PC-3 (cell line): ENCODE measurements at regions of chr3 and their contacts with region 1.

Region 1: GRCh38 chr3:180594631-180595558 is 7.1 kb upstream of the TTC14 start:
- DNase-seq: peak; percentile 75
- ATAC-seq: peak; percentile 93
- H3K4me3 ChIP-seq: no peak overlapping the region
- H3K27ac ChIP-seq: no peak overlapping the region
- H3K4me1 ChIP-seq: peaks cover 11% of the 10 kb centered on the region
- H3K27me3 ChIP-seq: no peaks in the 10 kb centered on the region
- CTCF ChIP-seq: peak; percentile 90

Region 2: GRCh38 chr3:179750720-179751328 is 844.1 kb before region 1 on chr3:
- CTCF ChIA-PET with region 1: no interaction called
- POLR2A ChIA-PET with region 1: no interaction called
- intact Hi-C with region 1: loop called (anchors 5 kb)
- DNase-seq: peak; percentile 60
- ATAC-seq: peak; percentile 71
- H3K4me3 ChIP-seq: no peak overlapping the region
- H3K27ac ChIP-seq: no peak overlapping the region
- H3K4me1 ChIP-seq: no peaks in the 10 kb centered on the region
- H3K27me3 ChIP-seq: no peaks in the 10 kb centered on the region
- CTCF ChIP-seq: peak; percentile 83

Region 3: GRCh38 chr3:179811321-179812095 is 783.4 kb before region 1 on chr3:
- CTCF ChIA-PET with region 1: interaction called, 20 read pairs
- POLR2A ChIA-PET with region 1: no interaction called
- intact Hi-C with region 1: loop called (anchors 1 kb)
- DNase-seq: peak; percentile 88
- ATAC-seq: peak; percentile 81
- H3K4me3 ChIP-seq: no peak overlapping the region
- H3K27ac ChIP-seq: peak overlapping the region; percentile 77
- H3K4me1 ChIP-seq: peaks cover 13% of the 10 kb centered on the region; the same call in 1 of the 2 replicates
- H3K27me3 ChIP-seq: no peaks in the 10 kb centered on the region
- CTCF ChIP-seq: peak; percentile 93

Region 4: GRCh38 chr3:179969525-179969924 is 625.4 kb before region 1 on chr3:
- CTCF ChIA-PET with region 1: no interaction called
- POLR2A ChIA-PET with region 1: interaction called, 17 read pairs
- intact Hi-C with region 1: no loop called
- DNase-seq: peak; percentile 95
- ATAC-seq: peak; percentile 87
- H3K4me3 ChIP-seq: no peak overlapping the region
- H3K27ac ChIP-seq: peak overlapping the region; percentile 70
- H3K4me1 ChIP-seq: peaks cover 9% of the 10 kb centered on the region
- H3K27me3 ChIP-seq: no peaks in the 10 kb centered on the region
- CTCF ChIP-seq: no peak

Region 5: GRCh38 chr3:180306691-180307090 is 288.2 kb before region 1 on chr3:
- CTCF ChIA-PET with region 1: interaction called, 3 read pairs
- POLR2A ChIA-PET with region 1: no interaction called
- intact Hi-C with region 1: loop called (anchors 2 kb)
- DNase-seq: peak; percentile 90
- ATAC-seq: peak; percentile 87
- H3K4me3 ChIP-seq: peak overlapping the region; percentile 48
- H3K27ac ChIP-seq: peak overlapping the region; percentile 47
- H3K4me1 ChIP-seq: peaks cover 40% of the 10 kb centered on the region
- H3K27me3 ChIP-seq: no peaks in the 10 kb centered on the region
- CTCF ChIP-seq: no peak

Region 6: DNA sequence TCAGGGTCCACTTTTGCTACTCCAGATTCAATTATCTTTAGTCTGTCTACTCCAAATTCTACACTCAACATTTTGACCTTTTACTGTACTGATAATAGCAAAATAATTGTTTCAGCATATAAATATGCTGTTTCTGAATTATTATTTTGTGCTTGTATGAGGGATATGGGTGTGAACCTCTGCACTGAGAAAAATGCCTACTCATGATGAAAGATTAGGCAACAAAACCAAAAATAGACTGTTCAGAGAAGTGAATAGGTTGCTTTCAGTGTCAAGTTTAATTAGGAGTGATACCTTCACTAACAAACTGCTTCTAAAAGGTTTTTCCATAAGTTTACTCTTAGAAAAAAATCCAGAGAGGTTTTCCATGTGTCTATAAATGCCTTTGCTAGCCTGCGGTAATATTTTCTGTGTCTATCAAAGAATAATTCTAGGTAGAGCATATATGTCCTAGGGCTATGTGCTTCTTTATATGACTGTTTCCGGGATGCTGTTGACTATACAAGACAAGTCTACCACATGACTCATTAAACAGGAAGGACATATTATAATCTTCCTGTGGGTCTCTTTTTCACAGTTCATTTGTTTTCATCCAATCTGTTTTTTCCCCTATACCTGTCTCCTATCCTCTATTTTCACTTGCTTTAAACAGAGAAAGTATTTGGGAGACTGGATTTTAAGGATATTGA is 211.4 kb before region 1 on chr3:
- CTCF ChIA-PET with region 1: no interaction called
- POLR2A ChIA-PET with region 1: no interaction called
- intact Hi-C with region 1: loop called (anchors 2 kb)
- DNase-seq: peak; percentile 75
- ATAC-seq: peak; percentile 90
- H3K4me3 ChIP-seq: no peak overlapping the region
- H3K27ac ChIP-seq: peak overlapping the region; percentile 69
- H3K4me1 ChIP-seq: peaks cover 32% of the 10 kb centered on the region
- H3K27me3 ChIP-seq: no peaks in the 10 kb centered on the region
- CTCF ChIP-seq: no peak

Region 7: GRCh38 chr3:180534828-180535227 is 60.1 kb before region 1 on chr3:
- CTCF ChIA-PET with region 1: no interaction called
- POLR2A ChIA-PET with region 1: no interaction called
- intact Hi-C with region 1: loop called (anchors 2 kb)
- DNase-seq: peak; percentile 58
- ATAC-seq: peak; percentile 87
- H3K4me3 ChIP-seq: no peak overlapping the region
- H3K27ac ChIP-seq: peak overlapping the region; percentile 57
- H3K4me1 ChIP-seq: peaks cover 18% of the 10 kb centered on the region
- H3K27me3 ChIP-seq: no peaks in the 10 kb centered on the region
- CTCF ChIP-seq: no peak

Region 8: DNA sequence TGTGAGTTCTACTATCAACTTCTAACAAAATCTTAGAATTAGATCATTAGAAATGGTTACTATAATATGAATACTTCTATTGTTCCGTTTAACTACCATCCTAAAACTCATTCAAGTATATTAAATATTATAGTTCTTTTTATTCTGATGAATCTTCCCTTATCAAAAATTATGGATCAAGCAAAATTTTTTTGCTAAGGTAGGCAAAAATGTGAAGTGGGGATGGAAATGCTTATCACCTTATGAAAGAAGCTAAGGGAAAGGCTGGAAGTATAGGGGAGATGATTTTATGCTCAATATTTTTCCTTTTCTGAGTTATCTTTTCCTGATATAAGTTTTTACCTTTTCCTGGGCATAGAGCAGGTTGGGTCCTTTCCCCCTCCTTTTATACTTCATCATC is 125.1 kb after region 1 on chr3:
- CTCF ChIA-PET with region 1: no interaction called
- POLR2A ChIA-PET with region 1: no interaction called
- intact Hi-C with region 1: no loop called
- DNase-seq: no peak
- ATAC-seq: no peak
- H3K4me3 ChIP-seq: no peak overlapping the region
- H3K27ac ChIP-seq: no peak overlapping the region
- H3K4me1 ChIP-seq: no peaks in the 10 kb centered on the region
- H3K27me3 ChIP-seq: peaks cover 52% of the 10 kb centered on the region
- CTCF ChIP-seq: no peak